ENCODE measurements at regions of chr18 and their contacts with region 1.

Region 1: GRCh38 chr18:27005589-27005988 is 140.1 kb upstream of the AQP4 start:
- DNase-seq: peak; percentile 7
- H3K4me3 ChIP-seq: no peak overlapping the region
- H3K27ac ChIP-seq: no peak overlapping the region
- H3K4me1 ChIP-seq: no peaks in the 10 kb centered on the region
- H3K27me3 ChIP-seq: no peaks in the 10 kb centered on the region
- CTCF ChIP-seq: peak; percentile 41; the same call in 1 of the 2 replicates

Region 2: DNA sequence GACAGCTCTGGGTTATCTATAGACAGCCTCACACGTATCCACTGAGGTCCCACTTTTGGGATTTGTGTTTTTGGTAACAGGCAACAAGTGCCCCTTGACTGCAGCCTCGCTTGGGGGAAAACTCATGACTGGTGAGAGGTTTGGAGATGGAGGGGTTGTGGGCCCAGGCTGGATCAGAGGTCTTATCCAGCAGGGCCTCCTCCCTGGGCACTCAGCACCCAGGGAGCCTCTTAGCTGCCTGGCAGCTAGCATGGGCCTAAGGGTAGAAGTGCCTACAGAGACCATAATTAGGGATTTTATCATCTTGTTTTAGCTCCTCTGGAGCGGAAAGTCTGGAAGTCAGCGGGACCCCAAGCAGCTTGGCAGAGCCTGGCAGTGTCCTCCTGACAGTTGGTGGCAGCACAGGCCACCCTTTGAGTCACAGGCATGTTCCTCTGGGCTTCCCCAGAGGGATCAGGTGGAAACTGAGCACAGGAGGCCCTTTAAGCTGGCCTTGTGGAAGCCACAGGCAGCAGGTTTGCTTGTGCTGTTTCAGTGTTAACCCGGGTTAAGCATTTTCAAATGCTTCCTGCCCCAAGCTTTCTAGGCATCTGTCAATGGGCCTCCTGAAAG is 600.3 kb before region 1 on chr18:
- CTCF ChIA-PET with region 1: no interaction called
- POLR2A ChIA-PET with region 1: no interaction called
- intact Hi-C with region 1: loop called (anchors 10 kb)
- DNase-seq: peak; percentile 46
- H3K4me3 ChIP-seq: no peak overlapping the region
- H3K27ac ChIP-seq: no peak overlapping the region
- H3K4me1 ChIP-seq: no peaks in the 10 kb centered on the region
- H3K27me3 ChIP-seq: no peaks in the 10 kb centered on the region
- CTCF ChIP-seq: peak; percentile 50